Natural killer cell (primary cell): ENCODE measurements at regions of chr4 and their contacts with region 1.

Region 1: DNA sequence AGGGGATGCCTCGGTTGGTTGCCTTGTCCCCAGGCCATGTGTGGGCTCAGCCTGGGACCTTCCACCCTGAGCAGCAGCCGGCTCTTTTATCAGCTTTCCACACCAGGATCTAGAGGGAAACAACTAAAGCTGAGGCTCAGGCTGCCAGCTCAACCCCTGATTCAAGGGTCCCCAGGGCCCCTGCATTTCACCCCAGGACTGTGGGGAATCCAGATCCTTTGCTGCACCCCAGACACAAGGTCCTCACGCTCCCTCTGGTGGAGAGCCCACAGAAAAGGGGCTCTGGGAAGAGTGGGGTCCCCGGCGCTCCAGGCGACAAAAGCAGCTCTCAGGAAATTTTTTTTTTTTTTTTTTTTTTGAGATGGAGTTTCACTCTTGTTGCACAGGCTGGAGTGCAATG is 64.3 kb downstream of the ZFYVE28 start:
- DNase-seq: peak in 1 of 2 donors; percentile 69
- ATAC-seq: peak in 2 of 3 donors; percentile 51 to 63
- H3K4me3 ChIP-seq: no peak overlapping the region
- H3K4me3 Mint-ChIP-seq: no peak overlapping the region
- H3K27ac ChIP-seq: no peak overlapping the region
- H3K27ac Mint-ChIP-seq: peak overlapping the region in 1 of 2 donors; percentile 80
- H3K4me1 ChIP-seq: peaks cover 17% of the 10 kb centered on the region
- H3K4me1 Mint-ChIP-seq: peaks cover 5 to 12% of the 10 kb centered on the region in 2 donors
- H3K27me3 ChIP-seq: no peaks in the 10 kb centered on the region
- H3K27me3 Mint-ChIP-seq: no peaks in the 10 kb centered on the region
- CTCF ChIP-seq: peak; percentile 31

Region 2: GRCh38 chr4:2290974-2291704 is 63.0 kb before region 1 on chr4:
- intact Hi-C with region 1: loop called (anchors 2 kb)
- DNase-seq: peak; percentile 78 to 95
- ATAC-seq: peak; percentile 88 to 92 (median 92)
- H3K4me3 ChIP-seq: no peak overlapping the region
- H3K4me3 Mint-ChIP-seq: peak overlapping the region; percentile 87
- H3K27ac ChIP-seq: peak overlapping the region; percentile 72
- H3K27ac Mint-ChIP-seq: peak overlapping the region; percentile 95
- H3K4me1 ChIP-seq: peaks cover 39% of the 10 kb centered on the region
- H3K4me1 Mint-ChIP-seq: peaks cover 11 to 24% of the 10 kb centered on the region in 2 donors
- H3K27me3 ChIP-seq: no peaks in the 10 kb centered on the region
- H3K27me3 Mint-ChIP-seq: no peaks in the 10 kb centered on the region
- CTCF ChIP-seq: no peak